ENCODE measurements at regions of chr7 and their contacts with region 1.

Region 1: GRCh38 chr7:136709876-136710275 is 158.6 kb upstream of the CHRM2 start:
- DNase-seq: no peak
- H3K4me3 ChIP-seq: no peak overlapping the region
- H3K27ac ChIP-seq: no peak overlapping the region
- H3K4me1 ChIP-seq: no peaks in the 10 kb centered on the region
- H3K27me3 ChIP-seq: no peaks in the 10 kb centered on the region
- CTCF ChIP-seq: no peak

Region 2: GRCh38 chr7:135238112-135238744 is 1471.6 kb before region 1 on chr7:
- CTCF ChIA-PET with region 1: no interaction called
- POLR2A ChIA-PET with region 1: no interaction called
- intact Hi-C with region 1: loop called (anchors 5 kb)
- DNase-seq: peak in 1 of 2 experiments; percentile 14
- H3K4me3 ChIP-seq: no peak overlapping the region
- H3K27ac ChIP-seq: no peak overlapping the region
- H3K4me1 ChIP-seq: no peaks in the 10 kb centered on the region
- H3K27me3 ChIP-seq: 0 out of 2 replicates have a peak, but pooled peaks cover 3% of the 10 kb centered on the region
- CTCF ChIP-seq: peak; percentile 73

Region 3: DNA sequence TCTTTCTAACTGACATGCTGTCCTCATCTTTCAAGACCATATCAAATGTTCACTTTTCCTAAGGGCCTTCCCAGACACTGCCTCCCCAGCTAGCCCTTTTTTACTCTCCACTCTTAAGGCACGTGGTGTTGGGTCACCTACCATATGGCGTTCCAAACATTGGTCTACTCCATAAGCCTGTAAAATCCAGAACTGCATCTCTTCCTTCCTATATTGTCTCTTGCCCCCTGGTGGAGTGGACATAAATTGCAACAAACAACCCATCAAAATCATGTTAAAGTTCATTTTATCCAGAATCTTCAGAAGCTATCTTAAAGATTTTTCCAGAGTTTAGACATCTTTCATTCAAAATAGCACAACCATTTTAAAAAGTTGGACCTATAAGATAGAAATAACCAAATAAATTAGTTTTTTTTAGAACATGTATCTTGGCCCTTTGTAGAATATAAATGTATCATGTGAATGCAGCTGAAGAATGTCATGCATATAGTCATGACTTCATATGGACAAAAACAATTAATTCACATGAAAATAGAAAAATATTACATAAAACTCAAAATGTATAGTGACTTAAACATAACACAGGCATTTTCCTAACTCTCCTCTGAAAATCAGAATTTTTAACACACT is 22.1 kb before region 1 on chr7:
- CTCF ChIA-PET with region 1: no interaction called
- POLR2A ChIA-PET with region 1: interaction called, 10 read pairs
- intact Hi-C with region 1: no loop called
- DNase-seq: no peak
- H3K4me3 ChIP-seq: no peak overlapping the region
- H3K27ac ChIP-seq: no peak overlapping the region
- H3K4me1 ChIP-seq: no peaks in the 10 kb centered on the region
- H3K27me3 ChIP-seq: 0 out of 2 replicates have a peak, but pooled peaks cover 4% of the 10 kb centered on the region
- CTCF ChIP-seq: peak; percentile 85